ENCODE measurements at regions of chr17 and their contacts with region 1.

Region 1: DNA sequence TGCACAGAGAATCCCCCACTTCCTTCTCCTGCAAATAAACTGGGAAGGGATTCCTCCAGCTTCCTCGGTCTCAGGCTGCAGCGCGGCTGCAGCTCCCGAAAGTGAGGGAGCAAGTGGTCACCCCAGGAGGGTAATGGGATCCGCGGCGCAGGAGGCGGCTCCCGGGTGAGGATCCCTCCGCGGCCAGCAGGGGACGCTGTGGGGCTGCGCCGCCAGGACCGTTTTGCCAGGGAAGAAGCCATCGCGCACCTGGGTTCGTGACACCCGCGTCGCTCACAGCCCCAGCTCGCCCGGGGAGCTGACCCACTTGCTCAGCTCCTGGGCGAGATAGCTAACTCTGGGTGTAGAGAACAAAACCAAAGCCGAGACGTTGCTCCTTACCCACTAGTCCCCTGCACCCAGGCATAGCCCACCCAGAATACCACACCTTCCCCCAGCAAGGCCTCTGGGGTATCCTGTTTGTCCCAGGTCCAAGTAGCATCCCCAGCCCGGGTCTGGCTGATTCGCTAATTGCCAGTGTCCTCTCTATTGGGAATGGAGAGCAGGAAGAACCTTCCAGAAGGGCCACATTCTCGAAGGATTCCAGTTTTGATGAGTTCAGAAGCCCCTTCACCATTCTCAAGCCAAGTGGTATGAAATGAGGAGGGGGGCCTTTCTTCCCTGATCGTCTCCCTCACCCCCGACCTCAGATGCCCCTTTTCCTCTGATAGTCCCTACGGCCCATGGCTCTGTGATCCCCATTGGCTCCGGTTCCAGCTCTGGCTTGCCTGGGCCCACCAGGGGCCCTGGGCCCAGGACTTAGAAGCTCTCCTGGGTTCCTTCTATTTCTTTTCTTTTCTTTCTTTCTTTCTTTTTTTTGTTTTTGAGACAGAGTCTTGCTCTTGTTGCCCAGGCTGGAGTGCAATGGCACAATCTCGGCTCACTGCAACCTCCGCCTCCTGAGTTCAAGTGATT is 14.1 kb downstream of the CYGB start:
- DNase-seq: peak; percentile 60
- H3K4me3 ChIP-seq: no peak overlapping the region
- H3K27ac ChIP-seq: no peak overlapping the region
- H3K4me1 ChIP-seq: peaks cover 10% of the 10 kb centered on the region
- H3K27me3 ChIP-seq: no peaks in the 10 kb centered on the region
- CTCF ChIP-seq: peak; percentile 99 to 100
- POLR2A ChIP-seq: no peak

Region 2: DNA sequence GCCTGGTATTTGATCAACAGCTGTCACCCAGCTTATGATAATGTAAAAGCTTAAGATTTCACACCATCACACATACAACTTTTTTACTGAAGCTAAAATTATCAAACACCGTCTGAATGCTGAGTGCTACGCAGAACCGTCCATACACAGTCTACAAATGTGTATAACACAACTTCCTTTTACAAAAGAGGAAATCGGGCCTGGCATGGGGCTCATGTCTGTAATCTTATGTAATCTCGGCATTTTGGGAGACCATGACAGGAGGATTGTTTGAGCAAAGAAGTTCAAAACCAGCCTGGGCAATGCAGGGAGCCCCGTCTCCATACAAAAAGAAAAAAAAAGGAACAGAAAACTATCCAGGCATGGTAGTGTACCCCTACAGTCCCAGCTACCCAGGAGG is 195.7 kb before region 1 on chr17:
- CTCF ChIA-PET with region 1: no interaction called
- POLR2A ChIA-PET with region 1: no interaction called
- dilution Hi-C with region 1: no loop called
- intact Hi-C with region 1: no loop called
- DNase-seq: no peak
- H3K4me3 ChIP-seq: no peak overlapping the region
- H3K27ac ChIP-seq: no peak overlapping the region
- H3K4me1 ChIP-seq: peaks cover 5% of the 10 kb centered on the region
- H3K27me3 ChIP-seq: no peaks in the 10 kb centered on the region
- CTCF ChIP-seq: no peak
- POLR2A ChIP-seq: no peak

Region 3: DNA sequence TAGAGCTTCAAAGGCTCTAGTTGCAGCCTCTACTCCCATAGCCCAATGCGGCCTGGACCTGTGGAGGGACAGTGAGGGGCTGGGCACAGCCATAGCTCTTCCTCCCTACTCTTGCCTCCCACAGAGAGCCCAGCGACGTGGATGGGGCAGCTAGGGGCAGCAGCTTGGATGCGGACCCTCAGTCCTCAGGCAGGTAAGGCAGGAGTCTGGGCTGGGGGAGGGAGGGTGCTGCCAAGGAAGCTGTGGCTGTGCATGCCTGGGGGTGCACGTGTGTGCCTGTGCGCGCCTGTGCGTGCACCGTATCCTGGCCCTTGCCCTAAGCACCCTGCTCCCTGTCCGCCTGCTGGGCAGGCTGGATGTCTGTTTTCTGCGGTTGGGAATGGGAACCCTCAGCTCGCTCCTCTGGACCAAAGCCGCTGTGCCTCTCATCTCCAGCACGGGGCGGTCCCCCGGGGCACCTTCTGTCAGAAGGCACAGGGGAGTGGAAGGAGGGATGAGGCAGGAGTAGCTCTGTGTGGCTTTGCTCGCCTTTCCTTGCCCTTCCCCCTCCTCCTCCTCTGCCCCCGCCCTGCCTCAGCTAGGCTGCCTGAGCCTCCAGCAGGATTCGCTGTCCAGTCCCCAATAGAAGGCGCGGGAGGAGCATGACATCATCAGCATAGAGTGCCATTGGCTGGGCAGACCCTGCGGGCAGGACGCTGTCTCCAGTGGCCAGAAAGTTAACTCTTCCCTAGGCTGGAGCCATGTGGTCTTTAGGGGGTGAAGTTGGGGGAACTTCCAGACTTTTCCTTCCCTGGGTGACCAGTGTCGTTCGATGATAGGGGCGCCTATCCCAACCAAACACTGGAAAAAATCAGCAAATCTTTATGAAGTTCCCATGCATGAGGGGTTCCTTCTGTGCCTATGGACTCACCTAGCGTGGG is 17.3 kb after region 1 on chr17:
- CTCF ChIA-PET with region 1: interaction called, 106 read pairs
- POLR2A ChIA-PET with region 1: interaction called, 3 read pairs
- dilution Hi-C with region 1: no loop called
- intact Hi-C with region 1: loop called (anchors 2 kb)
- DNase-seq: peak; percentile 95
- H3K4me3 ChIP-seq: peak overlapping the region in 1 of 3 experiments; percentile 35
- H3K27ac ChIP-seq: no peak overlapping the region
- H3K4me1 ChIP-seq: peaks cover 4% of the 10 kb centered on the region
- H3K27me3 ChIP-seq: peaks cover 17 to 19% of the 10 kb centered on the region in 2 experiments
- CTCF ChIP-seq: peak in 1 of 2 donors; percentile 27
- POLR2A ChIP-seq: peak; percentile 53

Region 4: DNA sequence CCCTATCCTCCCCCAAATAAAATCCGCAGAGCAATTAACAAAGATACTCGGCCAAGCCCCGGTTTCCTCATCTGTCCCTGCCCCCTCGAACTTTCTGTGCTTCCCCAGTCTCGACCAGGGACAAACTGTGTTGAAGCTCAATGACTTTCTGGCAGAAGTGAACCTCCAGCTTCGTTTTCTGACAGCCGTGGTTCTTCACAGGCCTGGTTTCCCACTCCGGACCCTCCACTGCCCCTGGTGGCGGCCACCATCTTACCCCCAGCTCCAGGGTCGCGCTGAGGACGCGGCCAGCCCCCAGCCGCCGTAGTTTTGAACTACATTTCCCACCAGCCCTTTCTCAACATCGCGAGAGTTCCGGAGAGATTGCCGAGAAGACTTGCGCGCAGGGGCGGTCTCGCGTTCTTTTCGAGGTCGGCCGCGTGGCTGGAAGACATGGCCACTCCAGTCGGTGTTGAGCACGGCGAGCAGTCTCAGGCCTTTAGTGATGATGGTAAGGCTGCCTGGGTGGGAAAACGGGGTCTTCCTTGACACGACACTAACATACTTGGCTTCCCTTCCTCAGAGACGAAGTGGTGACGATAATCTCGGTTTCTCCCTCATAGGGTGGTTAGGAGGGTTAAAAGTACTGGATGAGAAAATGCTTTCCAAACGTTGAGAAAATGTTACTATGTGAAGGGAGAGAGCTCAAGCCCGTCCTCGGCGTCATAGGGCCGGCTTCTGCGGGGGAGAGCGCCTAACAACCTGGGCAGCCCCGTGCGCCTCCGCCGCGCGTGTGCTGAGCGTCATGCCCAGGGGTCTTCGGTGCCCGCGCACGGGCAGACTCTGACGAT is 34.2 kb after region 1 on chr17:
- CTCF ChIA-PET with region 1: interaction called, 31 read pairs
- POLR2A ChIA-PET with region 1: interaction called, 4 read pairs
- dilution Hi-C with region 1: no loop called
- intact Hi-C with region 1: no loop called
- DNase-seq: peak; percentile 98
- H3K4me3 ChIP-seq: peak overlapping the region; percentile 66 to 94 (median 78)
- H3K27ac ChIP-seq: peak overlapping the region; percentile 68
- H3K4me1 ChIP-seq: peaks cover 40% of the 10 kb centered on the region
- H3K27me3 ChIP-seq: no peaks in the 10 kb centered on the region
- CTCF ChIP-seq: peak; percentile 80 to 88
- POLR2A ChIP-seq: peak; percentile 97

Region 5: GRCh38 chr17:76681222-76682137 is 158.1 kb after region 1 on chr17:
- CTCF ChIA-PET with region 1: interaction called, 35 read pairs
- POLR2A ChIA-PET with region 1: no interaction called
- dilution Hi-C with region 1: no loop called
- intact Hi-C with region 1: loop called (anchors 1 kb)
- DNase-seq: peak; percentile 72
- H3K4me3 ChIP-seq: no peak overlapping the region
- H3K27ac ChIP-seq: no peak overlapping the region
- H3K4me1 ChIP-seq: no peaks in the 10 kb centered on the region
- H3K27me3 ChIP-seq: no peaks in the 10 kb centered on the region
- CTCF ChIP-seq: peak; percentile 82 to 84
- POLR2A ChIP-seq: no peak

Measured in endothelial cell of umbilical vein (primary cell).